PC-9 (cell line): ENCODE measurements at regions of chr10 and their contacts with region 1.

Region 1: GRCh38 chr10:69222157-69223027 is 2.3 kb downstream of the HKDC1 start:
- DNase-seq: peak; percentile 81 to 96
- H3K4me3 ChIP-seq: peak overlapping the region; percentile 35; the same call in 1 of the 2 replicates
- H3K27ac ChIP-seq: peak overlapping the region; percentile 98
- H3K4me1 ChIP-seq: peaks cover 73% of the 10 kb centered on the region
- H3K27me3 ChIP-seq: no peaks in the 10 kb centered on the region
- CTCF ChIP-seq: peak; percentile 87

Region 2: GRCh38 chr10:69179743-69180524 is 42.5 kb before region 1 on chr10 and contains the start of gene SUPV3L1:
- CTCF ChIA-PET with region 1: no interaction called
- POLR2A ChIA-PET with region 1: no interaction called
- intact Hi-C with region 1: loop called (anchors 1 kb)
- DNase-seq: peak; percentile 90 to 97
- H3K4me3 ChIP-seq: peak within 1 kb of the TSS; percentile 89
- H3K27ac ChIP-seq: peak within 1 kb of the TSS; percentile 81
- H3K4me1 ChIP-seq: peaks cover 19% of the 10 kb centered on the region
- H3K27me3 ChIP-seq: no peaks in the 10 kb centered on the region
- CTCF ChIP-seq: no peak
- total RNA-seq, gene SUPV3L1: 49.9 and 55.7 TPM in 2 replicates